ENCODE measurements at regions of chr6 and their contacts with region 1.

Region 1: DNA sequence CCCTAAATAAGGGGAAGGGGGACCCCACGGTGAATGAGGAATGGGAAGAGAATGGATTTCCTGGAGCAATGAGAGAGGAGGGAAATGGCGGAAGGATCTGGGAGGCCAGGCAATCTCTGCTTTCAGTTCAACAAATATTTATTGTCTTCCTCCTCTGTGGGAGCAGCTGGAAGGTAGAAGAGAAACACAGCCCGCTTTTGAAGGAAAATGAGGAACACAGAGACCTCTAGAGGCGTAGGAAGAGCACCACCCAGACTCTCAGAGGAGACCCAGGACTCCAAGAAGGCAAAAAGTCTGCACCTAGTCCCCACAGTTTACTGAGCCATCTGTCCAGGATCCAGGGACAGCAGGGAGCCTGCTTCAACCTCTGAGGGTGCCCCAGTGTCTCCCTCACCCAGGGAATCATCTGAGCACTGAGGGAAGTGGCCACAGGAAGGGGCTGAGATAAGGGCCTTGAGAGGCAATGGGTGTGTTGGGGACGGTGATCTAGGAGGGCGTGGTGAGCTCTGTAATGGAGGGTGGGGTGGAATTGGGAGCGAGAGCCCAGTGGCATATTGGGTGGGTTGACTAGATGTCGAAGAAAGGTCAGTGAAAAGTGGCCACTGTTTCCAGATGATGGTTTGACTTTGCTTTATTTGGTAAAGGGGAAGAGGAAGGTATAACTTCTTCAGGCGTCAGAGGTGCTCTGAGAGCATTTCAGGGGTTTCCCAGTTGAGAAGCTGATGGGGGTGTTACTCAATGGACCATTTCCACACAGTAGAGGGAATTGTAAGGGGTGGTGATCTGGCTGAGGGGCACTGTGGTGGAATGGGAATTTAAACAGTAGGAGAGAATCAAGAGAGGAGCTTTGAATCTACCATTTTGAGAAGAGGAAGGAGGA is 610 bp downstream of the PSORS1C1 start:
- DNase-seq: peak in 3 of 14 experiments; percentile 40 to 48 (median 48)
- ATAC-seq: peak; percentile 78
- H3K4me3 ChIP-seq: no peak overlapping the region
- H3K4me3 Mint-ChIP-seq: no peak overlapping the region
- H3K27ac ChIP-seq: no peak overlapping the region
- H3K27ac Mint-ChIP-seq: no peak overlapping the region
- H3K4me1 ChIP-seq: peaks cover 9% of the 10 kb centered on the region
- H3K4me1 Mint-ChIP-seq: peaks cover 11% of the 10 kb centered on the region
- H3K27me3 ChIP-seq: peaks cover 0 to 3% of the 10 kb centered on the region in 2 experiments
- H3K27me3 Mint-ChIP-seq: peaks cover 7% of the 10 kb centered on the region
- CTCF ChIP-seq: peak; percentile 44

Region 2: GRCh38 chr6:30935018-30935417 is 180.2 kb before region 1 on chr6:
- CTCF ChIA-PET with region 1: no interaction called
- POLR2A ChIA-PET with region 1: no interaction called
- intact Hi-C with region 1: loop called in 1 of 2 experiments (anchors 10 kb)
- DNase-seq: no peak
- ATAC-seq: no peak
- H3K4me3 ChIP-seq: no peak overlapping the region
- H3K4me3 Mint-ChIP-seq: no peak overlapping the region
- H3K27ac ChIP-seq: no peak overlapping the region
- H3K27ac Mint-ChIP-seq: no peak overlapping the region
- H3K4me1 ChIP-seq: no peaks in the 10 kb centered on the region
- H3K4me1 Mint-ChIP-seq: no peaks in the 10 kb centered on the region
- H3K27me3 ChIP-seq: peaks cover 0 to 8% of the 10 kb centered on the region in 2 experiments
- H3K27me3 Mint-ChIP-seq: peaks cover 12% of the 10 kb centered on the region
- CTCF ChIP-seq: no peak

Region 3: GRCh38 chr6:31079656-31080261 is 35.5 kb before region 1 on chr6:
- CTCF ChIA-PET with region 1: no interaction called
- POLR2A ChIA-PET with region 1: interaction called, 5 read pairs
- intact Hi-C with region 1: loop called in 1 of 2 experiments (anchors 1 kb)
- DNase-seq: peak; percentile 52 to 82 (median 63)
- ATAC-seq: peak; percentile 94
- H3K4me3 ChIP-seq: peak overlapping the region; percentile 35
- H3K4me3 Mint-ChIP-seq: peak overlapping the region; percentile 61
- H3K27ac ChIP-seq: no peak overlapping the region
- H3K27ac Mint-ChIP-seq: no peak overlapping the region
- H3K4me1 ChIP-seq: peaks cover 9% of the 10 kb centered on the region
- H3K4me1 Mint-ChIP-seq: peaks cover 9% of the 10 kb centered on the region
- H3K27me3 ChIP-seq: no peaks in the 10 kb centered on the region
- H3K27me3 Mint-ChIP-seq: peaks cover 5% of the 10 kb centered on the region
- CTCF ChIP-seq: peak; percentile 96

Region 4: DNA sequence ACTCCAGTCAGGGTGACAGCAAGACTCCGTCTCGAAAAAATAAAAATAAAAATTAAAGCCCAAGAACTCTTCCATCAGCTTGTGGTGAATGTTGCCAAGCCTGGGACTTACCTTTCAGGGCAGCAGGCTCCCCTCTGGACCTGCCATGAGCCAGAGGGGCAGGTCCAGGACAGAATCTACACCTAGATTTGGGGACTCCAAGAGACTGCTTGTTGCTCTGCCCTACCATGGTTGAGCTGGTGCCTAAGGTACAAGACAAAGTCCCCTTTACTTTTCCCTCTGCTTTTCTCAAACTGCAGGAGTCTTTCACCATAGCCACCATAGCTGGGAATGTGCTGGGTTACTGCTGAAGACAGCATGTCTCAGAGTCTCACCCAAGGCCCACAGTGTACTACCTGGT is 12.1 kb before region 1 on chr6:
- CTCF ChIA-PET with region 1: no interaction called
- POLR2A ChIA-PET with region 1: no interaction called
- intact Hi-C with region 1: no loop called
- DNase-seq: no peak
- ATAC-seq: no peak
- H3K4me3 ChIP-seq: no peak overlapping the region
- H3K4me3 Mint-ChIP-seq: no peak overlapping the region
- H3K27ac ChIP-seq: no peak overlapping the region
- H3K27ac Mint-ChIP-seq: no peak overlapping the region
- H3K4me1 ChIP-seq: peaks cover 5% of the 10 kb centered on the region
- H3K4me1 Mint-ChIP-seq: peaks cover 10% of the 10 kb centered on the region
- H3K27me3 ChIP-seq: no peaks in the 10 kb centered on the region
- H3K27me3 Mint-ChIP-seq: no peaks in the 10 kb centered on the region
- CTCF ChIP-seq: no peak

Region 5: DNA sequence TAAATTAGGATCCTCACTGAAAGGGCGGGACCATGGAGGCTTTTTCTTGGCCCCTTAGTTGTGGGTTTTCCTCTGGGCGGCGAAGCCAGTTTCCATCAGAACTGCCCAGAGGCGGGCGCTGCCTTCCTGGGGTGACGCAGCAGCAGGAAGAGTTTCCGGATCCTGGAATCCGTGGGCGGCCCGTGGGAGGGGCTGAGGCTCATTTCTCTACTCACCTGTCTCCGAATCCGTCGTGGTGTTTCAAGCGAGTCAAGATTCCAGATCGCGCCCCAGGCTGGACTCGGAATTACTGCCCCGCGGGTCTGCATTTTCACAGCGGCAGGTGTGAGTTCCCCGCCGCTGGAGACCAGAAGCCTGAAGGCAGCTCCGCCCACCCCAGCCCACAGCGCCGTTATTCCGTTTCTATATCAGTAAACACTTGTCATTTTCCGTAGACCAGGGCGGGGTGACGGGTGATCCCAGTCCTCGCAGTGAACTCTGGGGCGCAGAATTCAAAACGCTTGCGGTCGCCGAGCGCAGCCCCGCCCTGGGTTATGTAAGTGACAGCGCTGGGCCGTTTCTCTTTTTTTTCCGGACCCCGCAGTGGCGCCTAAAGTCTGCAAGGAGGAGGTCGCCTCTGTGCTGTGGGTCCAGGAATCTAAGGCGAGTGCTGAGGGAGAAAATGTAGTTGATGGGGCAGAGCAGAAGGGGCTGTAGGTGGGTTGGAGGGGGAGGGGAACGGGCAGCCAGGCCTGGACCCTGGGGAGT is 82.5 kb after region 1 on chr6:
- CTCF ChIA-PET with region 1: no interaction called
- POLR2A ChIA-PET with region 1: no interaction called
- intact Hi-C with region 1: no loop called
- DNase-seq: peak; percentile 91 to 98 (median 92)
- ATAC-seq: peak; percentile 76
- H3K4me3 ChIP-seq: peak overlapping the region; percentile 71
- H3K4me3 Mint-ChIP-seq: peak overlapping the region; percentile 97
- H3K27ac ChIP-seq: peak overlapping the region; percentile 97 to 100
- H3K27ac Mint-ChIP-seq: peak overlapping the region; percentile 93
- H3K4me1 ChIP-seq: peaks cover 60% of the 10 kb centered on the region
- H3K4me1 Mint-ChIP-seq: peaks cover 65% of the 10 kb centered on the region
- H3K27me3 ChIP-seq: no peaks in the 10 kb centered on the region
- H3K27me3 Mint-ChIP-seq: no peaks in the 10 kb centered on the region
- CTCF ChIP-seq: no peak

Measured in CD4-positive, alpha-beta T cell (primary cell).